ENCODE measurements at regions of chr4 and their contacts with region 1.

Region 1: GRCh38 chr4:102344954-102345794 is at the start of gene SLC39A8:
- DNase-seq: peak; percentile 86
- H3K4me3 Mint-ChIP-seq: peak within 1 kb of the TSS; percentile 83
- H3K27ac Mint-ChIP-seq: peak within 1 kb of the TSS; percentile 98
- H3K4me1 Mint-ChIP-seq: peaks cover 48% of the 10 kb centered on the region
- H3K27me3 Mint-ChIP-seq: peaks cover 3% of the 10 kb centered on the region
- total RNA-seq, gene SLC39A8: 85.2 and 87.8 TPM in 2 replicates

Region 2: DNA sequence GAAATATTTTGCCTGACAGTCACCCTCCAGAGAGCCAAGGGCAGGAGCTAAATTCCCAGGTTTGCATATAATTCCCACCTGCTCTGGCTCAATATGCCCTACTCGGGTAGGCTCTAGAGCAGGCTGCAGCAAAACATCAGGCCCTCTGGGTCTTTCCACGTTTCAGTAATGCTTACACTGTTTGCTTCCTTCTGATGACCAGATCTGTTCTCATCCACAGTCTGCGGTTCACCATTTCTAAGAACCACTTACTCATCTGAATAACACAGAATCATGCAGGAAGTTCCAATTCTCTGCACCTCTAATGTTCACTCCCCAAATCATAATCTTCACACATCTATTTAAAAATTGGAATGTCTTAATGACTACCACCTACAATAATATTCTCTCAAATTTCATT is 1139.3 kb before region 1 on chr4:
- intact Hi-C with region 1: loop called (anchors 2 kb)
- DNase-seq: peak; percentile 56
- H3K4me3 Mint-ChIP-seq: peak overlapping the region; percentile 0
- H3K27ac Mint-ChIP-seq: peak overlapping the region; percentile 67
- H3K4me1 Mint-ChIP-seq: peaks cover 42% of the 10 kb centered on the region
- H3K27me3 Mint-ChIP-seq: no peaks in the 10 kb centered on the region

Region 3: DNA sequence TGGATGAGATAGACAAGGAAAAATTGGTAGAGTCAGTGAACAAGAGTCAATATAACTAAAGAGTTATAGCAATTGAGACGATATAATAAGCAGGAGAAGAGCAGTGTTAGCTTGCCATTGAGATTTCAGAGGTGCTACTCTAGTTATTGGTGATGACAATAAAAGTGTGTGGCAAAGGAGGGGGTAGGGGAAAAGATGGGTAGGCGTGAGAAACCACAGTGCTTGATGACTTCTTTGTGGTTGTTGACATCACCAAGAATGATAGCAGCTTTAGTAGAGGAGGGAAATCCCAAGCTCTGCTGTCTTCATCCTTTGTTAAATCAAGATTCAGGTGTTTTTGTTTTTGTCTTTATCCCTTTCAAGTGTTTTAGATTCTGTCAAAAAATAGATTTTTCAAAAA is 818.0 kb before region 1 on chr4:
- intact Hi-C with region 1: loop called (anchors 1 kb)
- DNase-seq: peak; percentile 68
- H3K4me3 Mint-ChIP-seq: peak overlapping the region; percentile 8
- H3K27ac Mint-ChIP-seq: peak overlapping the region; percentile 67
- H3K4me1 Mint-ChIP-seq: peaks cover 32% of the 10 kb centered on the region
- H3K27me3 Mint-ChIP-seq: peaks cover 26% of the 10 kb centered on the region

Region 4: DNA sequence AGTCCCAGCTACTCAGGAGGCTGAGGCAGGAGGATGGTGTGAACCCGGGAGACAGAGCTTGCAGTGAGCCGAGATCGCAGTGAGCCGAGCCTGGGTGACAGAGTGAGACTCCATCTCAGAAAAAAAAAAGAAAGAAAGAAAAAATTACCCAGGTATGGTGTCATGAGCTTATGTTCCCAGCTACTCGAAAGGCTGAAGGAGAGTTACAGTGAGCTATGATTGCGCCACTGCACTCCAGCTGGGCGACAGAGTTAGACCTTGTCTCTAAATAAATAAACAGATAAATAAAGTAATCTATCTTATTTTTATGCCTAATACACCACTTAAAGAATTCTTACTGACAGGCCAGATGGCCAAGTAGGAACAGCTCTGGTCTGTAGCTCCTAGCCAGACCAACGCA is 72.9 kb before region 1 on chr4:
- intact Hi-C with region 1: no loop called
- DNase-seq: no peak
- H3K4me3 Mint-ChIP-seq: no peak overlapping the region
- H3K27ac Mint-ChIP-seq: no peak overlapping the region
- H3K4me1 Mint-ChIP-seq: peaks cover 7% of the 10 kb centered on the region
- H3K27me3 Mint-ChIP-seq: no peaks in the 10 kb centered on the region

Region 5: DNA sequence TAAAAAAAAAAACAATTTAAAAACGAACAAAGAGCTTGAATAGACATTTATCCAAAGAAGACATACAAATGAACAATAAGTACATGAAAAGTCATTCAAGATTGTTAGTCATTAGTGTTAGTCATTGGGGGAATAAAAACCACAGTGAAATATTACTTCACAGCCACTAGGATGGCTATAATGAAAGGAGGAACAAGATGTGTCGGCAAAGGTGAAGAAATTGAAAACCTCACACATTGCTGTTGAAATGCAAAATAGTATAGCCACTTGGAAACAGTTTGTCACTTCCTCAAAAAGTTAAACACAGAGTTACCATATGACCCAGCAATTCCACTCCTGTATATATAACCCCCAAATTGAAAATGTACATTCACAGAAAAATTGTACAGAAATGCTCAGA is 45.3 kb after region 1 on chr4:
- intact Hi-C with region 1: loop called (anchors 1 kb)
- DNase-seq: no peak
- H3K4me3 Mint-ChIP-seq: no peak overlapping the region
- H3K27ac Mint-ChIP-seq: peak overlapping the region; percentile 58
- H3K4me1 Mint-ChIP-seq: peaks cover 20% of the 10 kb centered on the region
- H3K27me3 Mint-ChIP-seq: peaks cover 7% of the 10 kb centered on the region

Region 6: GRCh38 chr4:102400901-102401300 is 55.7 kb after region 1 on chr4:
- intact Hi-C with region 1: no loop called
- DNase-seq: no peak
- H3K4me3 Mint-ChIP-seq: no peak overlapping the region
- H3K27ac Mint-ChIP-seq: no peak overlapping the region
- H3K4me1 Mint-ChIP-seq: no peaks in the 10 kb centered on the region
- H3K27me3 Mint-ChIP-seq: peaks cover 6% of the 10 kb centered on the region

Region 7: DNA sequence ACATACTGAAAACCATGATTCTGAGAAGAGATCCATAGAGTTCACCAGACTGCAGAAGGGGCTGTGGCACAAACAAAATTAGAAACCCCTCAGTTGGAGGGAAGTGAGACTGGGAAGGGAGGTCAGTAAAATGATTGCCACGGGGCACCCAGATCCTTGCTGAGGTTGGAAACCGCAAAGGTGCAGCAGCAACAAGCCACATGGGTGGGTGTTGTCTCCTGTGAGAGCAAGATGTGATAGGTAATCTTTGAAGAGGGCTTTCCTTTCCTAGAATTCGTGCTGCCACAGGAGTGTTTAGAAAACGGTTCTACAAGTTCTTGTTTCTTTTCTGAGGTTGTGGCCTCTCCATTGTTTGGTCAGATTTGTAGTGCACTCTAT is 241.5 kb after region 1 on chr4:
- intact Hi-C with region 1: loop called (anchors 2 kb)
- DNase-seq: peak; percentile 61
- H3K4me3 Mint-ChIP-seq: peak overlapping the region; percentile 47
- H3K27ac Mint-ChIP-seq: peak overlapping the region; percentile 60
- H3K4me1 Mint-ChIP-seq: peaks cover 86% of the 10 kb centered on the region
- H3K27me3 Mint-ChIP-seq: no peaks in the 10 kb centered on the region

Region 8: DNA sequence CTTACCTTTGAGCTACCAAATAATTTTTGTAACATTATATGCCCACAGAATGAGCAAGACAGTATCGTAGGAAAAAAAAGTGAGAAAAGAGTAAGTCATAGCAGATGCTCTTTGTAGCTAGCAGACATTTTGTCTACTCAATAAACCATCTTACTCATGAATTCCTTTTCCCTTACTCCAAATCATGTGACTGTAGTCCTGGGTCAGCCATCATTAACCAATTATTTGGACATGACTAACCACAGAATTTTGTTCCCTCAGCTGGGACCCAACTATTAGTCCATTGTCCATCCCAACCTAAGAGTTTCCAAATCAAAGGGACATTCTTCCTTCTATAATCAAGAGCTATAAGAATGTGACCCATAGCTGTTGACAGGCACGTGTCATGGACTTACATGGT is 470.8 kb after region 1 on chr4:
- intact Hi-C with region 1: no loop called
- DNase-seq: no peak
- H3K4me3 Mint-ChIP-seq: no peak overlapping the region
- H3K27ac Mint-ChIP-seq: peak overlapping the region; percentile 84
- H3K4me1 Mint-ChIP-seq: peaks cover 87% of the 10 kb centered on the region
- H3K27me3 Mint-ChIP-seq: no peaks in the 10 kb centered on the region

Region 9: DNA sequence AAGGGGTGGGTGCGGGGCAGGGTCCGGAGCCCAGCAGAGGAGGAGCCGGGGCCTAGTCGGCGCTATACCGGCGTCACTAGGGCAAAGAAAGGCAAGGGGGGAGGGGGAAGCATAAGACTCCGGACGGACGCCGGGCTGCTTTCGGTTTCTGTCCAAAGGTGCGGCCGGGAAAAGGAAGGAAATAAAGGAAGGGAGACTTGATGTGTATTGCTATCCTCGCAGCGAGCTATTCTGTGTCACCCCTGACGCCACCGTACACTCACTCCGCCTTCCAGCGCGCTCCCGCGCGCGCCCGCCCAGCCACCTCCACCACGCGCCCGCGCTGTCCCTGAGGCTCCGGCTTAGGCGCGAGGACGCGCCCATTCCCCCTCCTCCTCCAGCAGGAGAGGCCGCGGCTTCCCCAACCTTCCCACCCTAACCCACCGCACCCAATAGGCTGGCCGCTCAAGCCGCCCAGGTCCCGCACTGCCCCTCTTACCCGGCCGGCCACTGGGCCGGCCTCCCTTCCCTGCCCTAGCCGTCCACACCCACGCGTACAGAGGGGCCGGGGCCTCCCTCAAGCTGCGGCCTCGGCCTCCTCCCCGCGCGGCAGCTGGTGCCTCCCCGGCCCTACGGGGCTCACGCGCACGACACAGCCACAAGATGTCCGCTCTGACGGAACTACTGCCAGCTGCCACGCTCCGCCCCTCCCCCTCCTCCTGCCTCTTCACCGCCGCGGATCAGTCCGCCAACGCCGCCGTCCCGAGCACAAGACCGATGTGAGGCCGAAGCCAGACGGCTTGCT is 481.9 kb after region 1 on chr4 and contains the start of gene UBE2D3:
- intact Hi-C with region 1: loop called (anchors 1 kb)
- DNase-seq: peak; percentile 92
- H3K4me3 Mint-ChIP-seq: no peak within 1 kb of the TSS
- H3K27ac Mint-ChIP-seq: no peak within 1 kb of the TSS
- H3K4me1 Mint-ChIP-seq: peaks cover 38% of the 10 kb centered on the region
- H3K27me3 Mint-ChIP-seq: no peaks in the 10 kb centered on the region
- total RNA-seq, gene UBE2D3: 480 and 507 TPM in 2 replicates

Region 10: DNA sequence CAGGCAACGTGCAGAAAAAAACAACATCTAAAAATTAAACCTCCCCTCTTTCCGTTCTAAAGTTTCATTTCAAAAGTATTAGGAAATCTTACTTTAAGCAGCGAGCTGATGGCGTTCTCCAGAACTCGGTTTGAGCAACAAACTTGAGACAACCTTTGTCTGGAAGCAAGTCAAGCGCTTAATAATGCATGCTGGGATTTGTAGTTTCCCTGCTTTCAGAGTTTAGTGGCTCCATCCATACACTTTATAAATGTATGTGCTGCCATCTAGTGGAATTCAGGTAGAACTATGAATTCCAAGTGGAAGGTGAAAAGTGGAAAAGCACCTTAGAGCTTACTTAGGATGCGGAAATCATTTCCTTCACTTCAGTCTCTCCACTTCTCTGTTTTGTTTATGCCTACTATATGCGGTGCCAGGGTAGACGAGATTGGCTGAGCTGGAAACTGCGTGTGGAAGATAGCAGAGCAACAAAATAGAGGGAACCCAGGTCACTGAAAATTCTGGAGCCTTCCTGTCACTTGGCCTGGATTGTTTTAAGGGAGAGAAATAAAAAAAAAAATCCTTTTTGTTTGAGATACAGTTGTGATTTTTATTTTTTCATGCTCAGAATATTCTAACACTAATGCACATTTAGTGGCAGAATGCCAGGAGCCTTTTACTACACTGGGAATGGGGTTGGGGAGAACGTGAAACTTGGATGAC is 754.7 kb after region 1 on chr4 and contains the start of gene BDH2:
- intact Hi-C with region 1: loop called (anchors 2 kb)
- DNase-seq: peak; percentile 41
- H3K4me3 Mint-ChIP-seq: peak within 1 kb of the TSS; percentile 84
- H3K27ac Mint-ChIP-seq: peak within 1 kb of the TSS; percentile 86
- H3K4me1 Mint-ChIP-seq: peaks cover 28% of the 10 kb centered on the region
- H3K27me3 Mint-ChIP-seq: no peaks in the 10 kb centered on the region
- total RNA-seq, gene BDH2: 9.1 and 11.0 TPM in 2 replicates

Measured in activated T-helper 1 cell treated with anti-CD3 and anti-CD28 coated beads, Interleukin-12 subunit alpha, Interleukin-12 subunit beta, Interleukin-2, Interleukin-4 antibody, amounts not matched to agents 30 ng/mL and 10 ng/mL and 1 ng/mL, durations not matched to agents 14 hours and 24 hours and 36 hours (primary cell).